ENCODE measurements at regions of chr3 and their contacts with region 1.

Region 1: DNA sequence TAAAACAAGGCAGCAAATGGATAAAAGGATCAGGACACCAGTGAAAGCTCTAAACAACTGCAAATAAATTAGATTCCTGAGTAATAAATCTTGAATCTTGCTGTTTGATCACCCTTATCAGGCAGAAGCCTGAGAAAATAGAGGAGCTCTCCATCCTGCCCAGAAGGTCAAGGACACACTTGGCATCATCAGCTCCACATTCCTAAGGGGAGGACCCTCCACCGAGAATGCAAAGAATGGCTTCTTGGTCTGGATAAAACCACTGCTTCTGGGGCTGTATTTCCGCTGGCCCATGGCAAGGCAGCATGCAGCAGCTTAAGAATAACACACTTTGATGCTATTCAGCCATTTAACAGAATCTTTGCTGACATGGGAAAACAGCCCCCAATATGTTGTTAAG is 108.9 kb upstream of the TSC22D2 start:
- DNase-seq: no peak
- H3K4me3 ChIP-seq: no peak overlapping the region
- H3K27ac ChIP-seq: no peak overlapping the region
- H3K4me1 ChIP-seq: peaks cover 0 to 13% (median 8%) of the 10 kb centered on the region in 4 experiments
- H3K27me3 ChIP-seq: no peaks in the 10 kb centered on the region

Region 2: GRCh38 chr3:150286390-150287147 is 12.6 kb before region 1 on chr3:
- CTCF ChIA-PET with region 1: interaction called, 25 read pairs
- POLR2A ChIA-PET with region 1: no interaction called
- DNase-seq: peak; percentile 67 to 72 (median 68)
- H3K4me3 ChIP-seq: no peak overlapping the region
- H3K27ac ChIP-seq: no peak overlapping the region
- H3K4me1 ChIP-seq: no peaks in the 10 kb centered on the region
- H3K27me3 ChIP-seq: no peaks in the 10 kb centered on the region

Region 3: GRCh38 chr3:150312018-150312652 is 12.9 kb after region 1 on chr3:
- CTCF ChIA-PET with region 1: interaction called, 15 read pairs
- POLR2A ChIA-PET with region 1: no interaction called
- DNase-seq: no peak
- H3K4me3 ChIP-seq: no peak overlapping the region
- H3K27ac ChIP-seq: no peak overlapping the region
- H3K4me1 ChIP-seq: peaks cover 0 to 2% (median 0%) of the 10 kb centered on the region in 4 experiments
- H3K27me3 ChIP-seq: no peaks in the 10 kb centered on the region

Measured in common myeloid progenitor, CD34-positive (primary cell).